Activated naive CD8-positive, alpha-beta T cell treated with anti-CD3 and anti-CD28 coated beads, Interleukin-2, amount 10 ng/mL, durations not matched to agents 7 days and 5 days (primary cell): ENCODE measurements at regions of chr10 and their contacts with region 1.

Region 1: DNA sequence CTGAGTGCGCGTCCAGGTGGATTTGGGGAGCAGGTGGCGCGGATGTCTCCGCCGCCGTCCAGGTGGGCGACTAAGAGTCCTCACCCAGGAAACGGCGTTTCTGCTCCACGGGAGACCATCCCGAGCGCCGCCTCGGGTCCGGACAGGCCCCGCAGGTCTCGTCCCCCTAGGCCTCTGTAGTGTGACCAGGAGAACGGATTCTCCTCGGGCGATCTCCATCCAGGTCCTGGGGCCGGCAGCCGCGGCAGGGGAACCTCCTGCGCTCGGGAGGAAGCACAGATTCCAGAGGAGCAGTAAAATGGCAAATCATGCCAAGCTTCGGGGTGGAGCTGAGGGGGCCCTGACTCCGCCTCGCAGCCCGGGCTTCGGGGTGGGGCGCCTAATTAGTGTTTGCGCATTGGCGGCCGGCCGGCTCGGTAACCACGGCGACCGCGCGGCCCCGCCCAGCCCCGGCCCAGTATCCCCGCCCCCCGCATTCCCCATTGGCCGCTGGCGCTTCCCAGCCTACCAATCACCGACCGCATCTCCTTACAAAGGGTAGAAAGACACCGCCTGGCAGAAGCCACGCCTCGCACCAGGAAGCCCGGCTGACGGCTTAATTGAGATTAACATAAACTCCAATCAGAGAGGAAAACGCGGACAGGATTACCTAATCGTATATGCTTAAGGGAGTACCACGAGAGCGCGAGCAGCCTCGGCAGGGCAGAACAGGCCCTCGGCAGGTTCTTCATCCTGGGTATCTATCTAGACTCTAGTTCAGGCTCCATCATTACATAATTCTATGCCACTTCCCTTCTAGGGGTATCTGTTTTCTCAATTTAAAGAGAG is 168.6 kb downstream of the ARHGAP12 start:
- DNase-seq: peak; percentile 91
- ATAC-seq: peak; percentile 96
- H3K4me3 Mint-ChIP-seq: peak overlapping the region; percentile 86
- H3K27ac Mint-ChIP-seq: peak overlapping the region; percentile 83
- H3K4me1 Mint-ChIP-seq: peaks cover 14% of the 10 kb centered on the region
- H3K27me3 Mint-ChIP-seq: no peaks in the 10 kb centered on the region

Region 2: DNA sequence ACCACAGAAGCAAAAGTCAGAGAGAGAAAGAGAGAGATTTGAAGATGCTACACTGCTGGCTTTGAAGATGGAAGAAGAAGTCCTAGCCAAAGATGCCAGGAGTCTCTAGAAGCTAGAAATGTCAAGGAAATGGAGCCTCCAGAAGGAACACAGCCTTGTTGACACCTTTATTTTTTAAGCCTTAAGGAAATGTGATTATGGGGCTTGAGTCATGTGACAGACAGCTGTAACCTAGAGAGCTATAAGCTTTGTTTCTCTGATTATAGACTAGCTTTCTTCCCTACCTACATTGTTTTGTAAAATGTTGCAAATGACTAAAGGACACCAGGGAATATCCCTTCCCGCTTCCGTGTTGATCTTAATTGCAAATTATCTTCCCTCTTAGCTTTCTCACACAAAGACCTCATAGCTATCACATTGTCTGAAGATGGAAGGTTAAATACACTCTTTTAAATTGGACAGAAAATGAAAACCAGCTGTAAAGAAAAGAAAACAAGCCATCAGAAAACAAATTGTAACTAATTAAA is 31.3 kb before region 1 on chr10:
- POLR2A ChIA-PET with region 1: interaction called, 10 read pairs
- DNase-seq: no peak
- ATAC-seq: no peak
- H3K4me3 Mint-ChIP-seq: no peak overlapping the region
- H3K27ac Mint-ChIP-seq: no peak overlapping the region
- H3K4me1 Mint-ChIP-seq: peaks cover 1% of the 10 kb centered on the region
- H3K27me3 Mint-ChIP-seq: peaks cover 18% of the 10 kb centered on the region

Region 3: DNA sequence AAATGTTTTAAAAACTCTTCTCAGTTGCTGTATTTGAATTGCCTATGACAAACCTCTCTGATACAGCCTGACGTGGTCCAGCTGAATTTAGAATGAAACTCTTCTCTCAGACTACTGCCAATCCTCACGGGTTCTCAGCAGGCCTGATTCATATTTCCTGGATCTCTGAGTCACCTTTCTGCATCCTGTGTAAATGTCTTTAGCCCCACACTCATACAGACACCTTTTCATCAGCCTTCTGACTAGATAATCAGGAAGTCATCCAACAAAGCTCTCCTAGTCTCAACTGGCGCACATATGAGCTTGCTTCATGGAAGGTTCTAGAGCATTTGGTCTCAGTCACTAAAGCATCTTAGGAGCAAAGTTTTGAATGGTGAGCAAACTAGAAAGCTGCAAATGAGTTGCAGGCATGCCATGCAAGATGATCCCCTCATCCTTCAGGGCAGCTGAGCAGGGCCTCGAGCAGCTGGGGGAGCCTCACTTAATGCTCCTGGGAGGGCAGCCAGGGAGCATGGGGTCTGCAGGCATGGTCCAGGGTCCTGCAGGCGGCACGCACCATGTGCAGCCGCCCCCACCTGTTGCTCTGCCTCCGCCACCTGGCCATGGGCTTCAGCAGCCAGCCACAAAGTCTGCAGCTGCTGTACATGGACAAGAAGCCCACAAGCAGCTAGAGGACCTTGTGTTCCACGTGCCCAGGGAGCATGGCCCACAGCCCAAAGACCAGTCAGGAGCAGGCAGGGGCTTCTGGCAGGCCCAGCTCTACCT is 14.2 kb before region 1 on chr10:
- POLR2A ChIA-PET with region 1: interaction called, 17 read pairs
- DNase-seq: no peak
- ATAC-seq: peak; percentile 99
- H3K4me3 Mint-ChIP-seq: peak overlapping the region; percentile 15
- H3K27ac Mint-ChIP-seq: peak overlapping the region; percentile 79
- H3K4me1 Mint-ChIP-seq: peaks cover 10% of the 10 kb centered on the region
- H3K27me3 Mint-ChIP-seq: no peaks in the 10 kb centered on the region

Region 4: GRCh38 chr10:31789557-31789956 is 29.5 kb after region 1 on chr10:
- POLR2A ChIA-PET with region 1: no interaction called
- DNase-seq: no peak
- ATAC-seq: peak; percentile 39
- H3K4me3 Mint-ChIP-seq: no peak overlapping the region
- H3K27ac Mint-ChIP-seq: no peak overlapping the region
- H3K4me1 Mint-ChIP-seq: no peaks in the 10 kb centered on the region
- H3K27me3 Mint-ChIP-seq: peaks cover 17% of the 10 kb centered on the region